IMR-90 (cell line): ENCODE measurements at regions of chr16 and their contacts with region 1.

Region 1: DNA sequence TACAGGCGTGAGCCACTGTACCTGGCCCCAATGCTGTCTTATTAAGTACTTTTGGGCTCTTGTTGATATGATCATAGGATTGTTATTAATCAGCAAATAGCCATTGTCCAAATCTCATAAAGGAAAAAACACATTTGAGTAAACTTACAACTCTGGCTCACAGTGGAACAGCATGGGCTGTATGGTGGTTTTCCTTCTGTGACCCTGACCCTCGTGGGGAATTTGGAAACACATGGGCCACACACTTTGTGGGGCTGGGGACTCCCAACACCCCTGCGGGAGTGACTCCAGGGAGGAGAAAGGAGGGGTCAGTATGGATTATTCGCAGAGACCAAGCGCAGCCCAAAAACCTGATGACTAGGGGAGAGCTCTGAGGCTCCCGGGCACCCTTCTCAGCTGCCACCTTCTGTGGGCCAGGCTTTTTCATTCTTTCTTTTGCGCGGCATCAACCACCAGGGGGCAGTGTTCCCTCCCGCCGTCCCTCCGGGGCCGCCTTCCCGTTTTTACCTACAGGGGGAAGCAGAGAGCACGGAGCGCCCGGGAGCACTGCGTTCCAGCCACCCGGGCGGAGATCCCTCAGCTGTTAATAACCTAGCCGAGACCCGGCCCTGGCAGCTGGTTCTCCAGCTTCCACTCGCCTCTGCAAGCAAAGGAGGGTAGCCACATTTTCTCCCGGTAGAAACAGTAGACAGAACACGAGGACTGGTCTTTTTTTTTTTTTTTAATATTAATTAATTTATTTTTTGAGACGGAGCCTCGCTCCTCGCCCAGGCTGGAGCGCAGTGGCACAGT is 9.7 kb downstream of the TSNAXIP1 start:
- DNase-seq: peak; percentile 47
- ATAC-seq: peak; percentile 99
- H3K4me3 ChIP-seq: no peak overlapping the region
- H3K27ac ChIP-seq: no peak overlapping the region
- H3K4me1 ChIP-seq: no peaks in the 10 kb centered on the region
- H3K27me3 ChIP-seq: 0 out of 2 replicates have a peak, but pooled peaks cover 2% of the 10 kb centered on the region
- CTCF ChIP-seq: peak; percentile 100; the same call in 1 of the 2 replicates
- POLR2A ChIP-seq: no peak
- RAD21 ChIP-seq: peak; percentile 87

Region 2: DNA sequence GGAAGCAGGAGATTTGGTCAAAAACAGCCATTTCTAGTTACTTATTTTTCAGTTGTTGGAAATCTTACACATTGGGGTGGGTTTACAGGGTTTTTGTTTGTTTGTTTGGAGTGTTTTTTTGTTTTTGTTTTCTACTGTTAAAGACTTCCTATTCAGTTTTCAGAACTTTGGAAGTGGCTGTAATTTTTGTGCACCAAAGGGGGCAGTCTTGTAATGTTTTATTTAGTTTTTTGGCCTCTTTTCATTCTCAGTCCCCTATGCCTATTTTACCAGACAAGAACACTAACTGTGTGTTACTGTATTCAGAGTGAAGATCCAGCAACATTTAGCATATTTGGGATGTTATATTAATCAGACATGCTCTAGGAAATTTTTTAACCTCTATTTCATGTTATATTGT is 443.8 kb before region 1 on chr16:
- CTCF ChIA-PET with region 1: no interaction called
- POLR2A ChIA-PET with region 1: no interaction called
- dilution Hi-C with region 1: no loop called
- in situ Hi-C with region 1: no loop called
- intact Hi-C with region 1: no loop called
- DNase-seq: peak; percentile 36
- ATAC-seq: peak; percentile 49; the same call in 1 of the 2 replicates
- H3K4me3 ChIP-seq: no peak overlapping the region
- H3K27ac ChIP-seq: no peak overlapping the region
- H3K4me1 ChIP-seq: peaks cover 3% of the 10 kb centered on the region; the same call in 1 of the 2 replicates
- H3K27me3 ChIP-seq: peaks cover 17% of the 10 kb centered on the region
- CTCF ChIP-seq: peak; percentile 57
- POLR2A ChIP-seq: no peak
- RAD21 ChIP-seq: peak; percentile 51

Region 3: DNA sequence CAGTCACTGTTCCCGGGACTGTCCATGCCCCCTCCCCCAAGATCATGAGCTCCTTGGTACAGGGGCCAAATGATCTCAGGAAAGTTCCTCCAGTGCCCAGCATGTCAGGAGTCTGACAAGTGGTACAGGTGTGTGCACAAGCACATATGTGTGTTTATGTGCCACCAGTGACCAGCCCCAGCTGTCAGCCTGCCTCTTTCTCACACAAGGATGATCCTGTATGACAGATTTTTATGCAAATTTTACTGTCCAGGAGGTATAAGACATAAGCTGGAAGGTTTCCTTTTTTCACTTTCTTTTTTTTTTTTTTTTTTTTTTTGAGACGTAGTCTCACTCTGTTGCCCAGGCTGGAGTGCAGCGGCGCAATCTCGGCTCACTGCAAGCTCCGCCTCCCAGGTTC is 66.0 kb before region 1 on chr16:
- CTCF ChIA-PET with region 1: no interaction called
- POLR2A ChIA-PET with region 1: no interaction called
- dilution Hi-C with region 1: no loop called
- in situ Hi-C with region 1: no loop called
- intact Hi-C with region 1: no loop called
- DNase-seq: no peak
- ATAC-seq: no peak
- H3K4me3 ChIP-seq: no peak overlapping the region
- H3K27ac ChIP-seq: no peak overlapping the region
- H3K4me1 ChIP-seq: no peaks in the 10 kb centered on the region
- H3K27me3 ChIP-seq: no peaks in the 10 kb centered on the region
- CTCF ChIP-seq: no peak
- POLR2A ChIP-seq: no peak
- RAD21 ChIP-seq: no peak

Region 4: DNA sequence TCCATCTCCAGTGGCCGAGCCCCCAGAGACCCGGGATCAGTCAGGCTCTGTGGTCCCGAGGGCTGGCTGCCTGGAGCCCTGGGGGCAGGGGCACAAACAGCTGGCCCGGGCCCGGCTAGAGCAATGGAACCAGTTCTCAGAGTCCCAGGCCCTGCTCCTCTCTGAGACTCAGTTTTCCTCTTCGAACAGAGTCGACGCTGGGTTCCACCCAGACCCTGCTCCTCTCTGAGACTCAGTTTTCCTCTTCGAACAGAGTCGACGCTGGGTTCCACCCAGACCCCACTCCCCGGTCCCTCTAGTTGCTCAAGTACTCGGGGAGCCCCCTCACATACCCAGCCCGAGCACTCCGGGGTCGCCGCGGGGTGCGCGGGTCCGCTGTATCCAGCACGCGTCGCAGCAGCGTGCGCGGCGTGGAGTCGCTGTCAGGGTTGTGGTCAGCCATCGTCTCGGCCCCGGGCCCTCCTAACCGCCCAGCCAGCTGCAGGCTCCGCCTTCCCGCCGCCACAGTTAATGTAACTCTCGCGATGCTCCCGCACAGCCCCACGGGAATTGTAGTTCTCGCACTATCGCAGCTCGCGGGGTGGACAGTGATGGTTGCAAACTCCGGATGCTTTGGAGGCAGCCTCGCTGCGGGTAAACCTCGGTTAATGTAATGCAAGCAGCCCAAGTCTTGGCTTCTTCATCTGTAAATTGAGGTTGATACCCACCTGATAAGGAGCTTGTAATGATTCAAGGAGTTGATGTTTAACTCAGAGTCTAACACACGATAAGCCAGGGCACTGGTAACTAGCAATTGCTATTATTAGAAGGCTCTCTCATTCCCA is 17.2 kb after region 1 on chr16:
- CTCF ChIA-PET with region 1: interaction called, 11 read pairs
- POLR2A ChIA-PET with region 1: no interaction called
- dilution Hi-C with region 1: no loop called
- in situ Hi-C with region 1: no loop called
- intact Hi-C with region 1: no loop called
- DNase-seq: peak; percentile 84
- ATAC-seq: peak; percentile 99
- H3K4me3 ChIP-seq: peak overlapping the region; percentile 75
- H3K27ac ChIP-seq: peak overlapping the region; percentile 77
- H3K4me1 ChIP-seq: peaks cover 2% of the 10 kb centered on the region
- H3K27me3 ChIP-seq: no peaks in the 10 kb centered on the region
- CTCF ChIP-seq: no peak
- POLR2A ChIP-seq: peak; percentile 84
- RAD21 ChIP-seq: no peak

Region 5: GRCh38 chr16:67865316-67865715 is 48.9 kb after region 1 on chr16:
- CTCF ChIA-PET with region 1: interaction called, 5 read pairs
- POLR2A ChIA-PET with region 1: no interaction called
- dilution Hi-C with region 1: no loop called
- in situ Hi-C with region 1: no loop called
- intact Hi-C with region 1: loop called (anchors 2 kb)
- DNase-seq: peak; percentile 26
- ATAC-seq: peak; percentile 33; the same call in 1 of the 2 replicates
- H3K4me3 ChIP-seq: no peak overlapping the region
- H3K27ac ChIP-seq: no peak overlapping the region
- H3K4me1 ChIP-seq: peaks cover 20% of the 10 kb centered on the region
- H3K27me3 ChIP-seq: no peaks in the 10 kb centered on the region
- CTCF ChIP-seq: peak; percentile 50
- POLR2A ChIP-seq: no peak
- RAD21 ChIP-seq: peak; percentile 55

Region 6: GRCh38 chr16:67935402-67936123 is 119.1 kb after region 1 on chr16:
- CTCF ChIA-PET with region 1: interaction called, 16 read pairs
- POLR2A ChIA-PET with region 1: no interaction called
- dilution Hi-C with region 1: no loop called
- in situ Hi-C with region 1: no loop called
- intact Hi-C with region 1: no loop called
- DNase-seq: peak; percentile 87
- ATAC-seq: peak; percentile 81
- H3K4me3 ChIP-seq: peak overlapping the region; percentile 94
- H3K27ac ChIP-seq: peak overlapping the region; percentile 98
- H3K4me1 ChIP-seq: peaks cover 11% of the 10 kb centered on the region
- H3K27me3 ChIP-seq: no peaks in the 10 kb centered on the region
- CTCF ChIP-seq: no peak
- POLR2A ChIP-seq: peak; percentile 70; the same call in 1 of the 2 replicates
- RAD21 ChIP-seq: no peak

Region 7: DNA sequence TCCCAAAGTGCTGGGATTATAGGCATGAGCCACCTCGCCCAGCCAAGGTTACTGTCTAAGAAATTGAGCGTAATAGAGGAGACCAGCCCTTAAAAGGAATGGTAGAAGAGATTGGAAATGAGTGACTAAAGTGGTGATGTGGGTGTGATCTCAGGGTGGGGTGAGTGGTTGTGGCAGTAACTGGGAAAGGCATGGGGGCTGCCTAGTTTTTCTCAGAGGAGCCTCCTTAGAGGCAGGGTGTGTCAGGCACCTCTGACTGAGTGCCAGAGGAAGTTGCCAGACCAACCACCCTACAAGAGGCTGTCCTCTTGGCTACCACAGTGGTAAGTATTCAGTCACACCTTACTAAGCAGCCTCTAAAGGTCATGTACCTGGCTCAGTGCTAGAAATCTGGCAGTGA is 215.5 kb after region 1 on chr16:
- CTCF ChIA-PET with region 1: no interaction called
- POLR2A ChIA-PET with region 1: no interaction called
- dilution Hi-C with region 1: no loop called
- in situ Hi-C with region 1: no loop called
- intact Hi-C with region 1: no loop called
- DNase-seq: no peak
- ATAC-seq: no peak
- H3K4me3 ChIP-seq: no peak overlapping the region
- H3K27ac ChIP-seq: no peak overlapping the region
- H3K4me1 ChIP-seq: no peaks in the 10 kb centered on the region
- H3K27me3 ChIP-seq: no peaks in the 10 kb centered on the region
- CTCF ChIP-seq: no peak
- POLR2A ChIP-seq: no peak
- RAD21 ChIP-seq: no peak

Region 8: DNA sequence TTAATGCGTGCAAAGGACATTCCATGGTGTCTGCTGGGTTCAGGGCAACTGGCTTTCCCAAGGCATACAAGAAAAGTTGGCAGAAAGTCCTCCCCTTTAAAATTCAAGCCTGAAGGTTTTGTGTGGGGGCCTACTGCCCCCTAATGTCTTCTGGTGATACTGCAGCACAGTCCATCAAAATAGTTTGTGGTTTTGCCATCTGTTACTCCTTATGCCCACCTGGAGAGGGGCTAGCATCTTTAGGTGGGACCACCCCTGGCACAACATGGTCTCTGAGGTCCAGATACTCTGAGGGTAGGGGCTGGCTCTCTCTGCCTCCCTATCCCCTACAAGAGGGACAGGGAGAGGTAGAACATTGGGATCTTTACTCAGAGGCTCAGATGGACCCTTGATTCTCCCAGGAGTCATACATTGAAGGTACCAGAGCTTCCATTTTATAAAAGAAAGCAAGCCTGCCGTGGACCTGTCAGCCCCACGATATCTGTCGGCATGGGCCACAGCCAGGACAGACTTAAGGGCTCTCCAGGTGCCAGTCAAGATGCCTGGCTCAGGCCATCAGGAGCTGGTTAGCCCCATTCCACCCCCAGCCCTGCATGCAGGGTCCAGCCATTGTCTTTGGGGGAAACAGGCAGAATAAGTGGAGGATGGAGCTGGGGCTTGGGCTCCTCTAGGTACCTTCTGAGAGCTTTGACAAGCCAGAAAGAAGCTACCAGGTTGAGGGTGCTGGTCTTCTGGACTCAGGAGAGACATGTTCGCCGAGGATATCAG is 413.2 kb after region 1 on chr16:
- CTCF ChIA-PET with region 1: no interaction called
- POLR2A ChIA-PET with region 1: no interaction called
- dilution Hi-C with region 1: no loop called
- in situ Hi-C with region 1: no loop called
- intact Hi-C with region 1: loop called (anchors 1 kb)
- DNase-seq: peak; percentile 65
- ATAC-seq: peak; percentile 86
- H3K4me3 ChIP-seq: no peak overlapping the region
- H3K27ac ChIP-seq: no peak overlapping the region
- H3K4me1 ChIP-seq: peaks cover 4% of the 10 kb centered on the region
- H3K27me3 ChIP-seq: no peaks in the 10 kb centered on the region
- CTCF ChIP-seq: peak; percentile 94
- POLR2A ChIP-seq: no peak
- RAD21 ChIP-seq: peak; percentile 92

Region 9: DNA sequence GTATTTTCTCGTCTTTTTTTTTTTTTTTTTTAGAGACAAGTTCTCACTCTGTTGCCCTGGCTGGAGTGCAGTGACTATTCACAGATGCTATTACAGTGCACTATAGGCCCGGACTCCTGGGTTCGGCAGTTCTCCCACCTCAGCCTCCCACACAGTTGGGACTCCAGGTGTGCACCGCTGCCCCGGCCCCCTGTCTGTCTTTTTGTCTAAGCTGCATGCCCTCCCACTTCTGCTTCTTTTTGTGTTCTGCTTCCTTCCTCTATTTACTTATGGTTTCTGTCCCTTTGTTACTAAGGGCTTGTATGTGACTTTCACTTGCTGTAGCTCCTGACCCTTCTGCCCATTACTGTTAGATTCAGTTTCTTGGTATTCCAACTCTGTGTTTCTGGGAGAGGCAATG is 468.4 kb after region 1 on chr16:
- CTCF ChIA-PET with region 1: no interaction called
- POLR2A ChIA-PET with region 1: no interaction called
- dilution Hi-C with region 1: no loop called
- in situ Hi-C with region 1: no loop called
- intact Hi-C with region 1: no loop called
- DNase-seq: no peak
- ATAC-seq: no peak
- H3K4me3 ChIP-seq: no peak overlapping the region
- H3K27ac ChIP-seq: no peak overlapping the region
- H3K4me1 ChIP-seq: peaks cover 11% of the 10 kb centered on the region
- H3K27me3 ChIP-seq: no peaks in the 10 kb centered on the region
- CTCF ChIP-seq: no peak
- POLR2A ChIP-seq: no peak
- RAD21 ChIP-seq: no peak